ENCODE measurements at regions of chr11 and their contacts with region 1.

Region 1: DNA sequence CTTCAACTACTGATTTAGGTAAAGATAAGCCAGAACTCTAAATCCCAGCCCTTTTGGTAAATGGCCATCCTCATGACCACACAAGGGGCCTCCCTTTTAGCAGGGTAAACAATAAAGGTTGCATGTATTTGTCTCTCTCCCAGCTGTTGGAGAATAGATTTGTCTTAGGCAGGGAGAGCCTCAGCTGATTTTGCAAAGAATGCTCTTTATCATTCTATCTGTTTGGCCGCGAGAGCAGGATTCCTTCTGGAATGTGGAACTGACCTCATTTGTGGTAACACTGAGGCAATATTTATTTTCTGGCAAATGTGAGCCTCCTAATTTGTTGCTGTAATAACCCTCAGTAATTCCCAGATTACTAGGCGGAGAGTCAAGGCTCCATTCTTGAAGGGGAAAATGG is 15.3 kb downstream of the PTS start:
- DNase-seq: peak; percentile 66 to 80
- H3K4me3 ChIP-seq: no peak overlapping the region
- H3K4me3 Mint-ChIP-seq: no peak overlapping the region
- H3K27ac Mint-ChIP-seq: no peak overlapping the region
- H3K4me1 ChIP-seq: peaks cover 12% of the 10 kb centered on the region
- H3K4me1 Mint-ChIP-seq: peaks cover 29% of the 10 kb centered on the region
- H3K27me3 ChIP-seq: no peaks in the 10 kb centered on the region
- H3K27me3 Mint-ChIP-seq: no peaks in the 10 kb centered on the region
- CTCF ChIP-seq: no peak

Region 2: DNA sequence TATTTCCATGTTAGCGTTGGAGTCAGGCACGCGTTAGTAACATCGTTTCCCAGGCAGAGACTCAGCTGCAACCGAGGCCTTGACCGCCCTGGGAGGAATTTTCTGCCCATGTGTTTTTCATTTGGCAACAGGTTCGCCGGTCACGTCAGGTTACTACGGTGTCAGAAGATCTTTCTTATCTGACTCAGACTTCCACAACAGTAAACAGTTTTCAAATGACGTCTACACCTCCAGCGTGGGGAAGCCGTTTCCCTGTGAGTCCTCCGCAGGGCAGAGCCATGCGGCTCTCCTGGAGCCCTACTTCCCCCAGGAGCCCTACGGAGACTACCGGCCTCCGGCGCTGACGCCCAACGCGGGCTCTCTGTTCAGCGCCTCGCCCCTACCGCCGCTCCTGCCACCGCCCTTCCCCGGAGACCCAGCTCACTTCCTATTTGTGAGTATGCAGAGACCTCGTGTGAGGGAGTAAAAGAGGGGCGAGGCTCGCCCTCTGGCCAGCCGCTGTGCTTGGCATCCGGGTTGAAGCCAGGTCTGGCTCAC is 957.5 kb before region 1 on chr11:
- CTCF ChIA-PET with region 1: no interaction called
- POLR2A ChIA-PET with region 1: no interaction called
- intact Hi-C with region 1: no loop called
- DNase-seq: no peak
- H3K4me3 ChIP-seq: no peak overlapping the region
- H3K4me3 Mint-ChIP-seq: no peak overlapping the region
- H3K27ac Mint-ChIP-seq: peak overlapping the region; percentile 14
- H3K4me1 ChIP-seq: peaks cover 44% of the 10 kb centered on the region
- H3K4me1 Mint-ChIP-seq: peaks cover 29% of the 10 kb centered on the region
- H3K27me3 ChIP-seq: no peaks in the 10 kb centered on the region
- H3K27me3 Mint-ChIP-seq: no peaks in the 10 kb centered on the region
- CTCF ChIP-seq: no peak

Region 3: GRCh38 chr11:112050721-112051120 is 190.8 kb before region 1 on chr11:
- CTCF ChIA-PET with region 1: no interaction called
- POLR2A ChIA-PET with region 1: no interaction called
- intact Hi-C with region 1: no loop called
- DNase-seq: no peak
- H3K4me3 ChIP-seq: no peak overlapping the region
- H3K4me3 Mint-ChIP-seq: no peak overlapping the region
- H3K27ac Mint-ChIP-seq: no peak overlapping the region
- H3K4me1 ChIP-seq: no peaks in the 10 kb centered on the region
- H3K4me1 Mint-ChIP-seq: no peaks in the 10 kb centered on the region
- H3K27me3 ChIP-seq: no peaks in the 10 kb centered on the region
- H3K27me3 Mint-ChIP-seq: no peaks in the 10 kb centered on the region
- CTCF ChIP-seq: no peak

Region 4: DNA sequence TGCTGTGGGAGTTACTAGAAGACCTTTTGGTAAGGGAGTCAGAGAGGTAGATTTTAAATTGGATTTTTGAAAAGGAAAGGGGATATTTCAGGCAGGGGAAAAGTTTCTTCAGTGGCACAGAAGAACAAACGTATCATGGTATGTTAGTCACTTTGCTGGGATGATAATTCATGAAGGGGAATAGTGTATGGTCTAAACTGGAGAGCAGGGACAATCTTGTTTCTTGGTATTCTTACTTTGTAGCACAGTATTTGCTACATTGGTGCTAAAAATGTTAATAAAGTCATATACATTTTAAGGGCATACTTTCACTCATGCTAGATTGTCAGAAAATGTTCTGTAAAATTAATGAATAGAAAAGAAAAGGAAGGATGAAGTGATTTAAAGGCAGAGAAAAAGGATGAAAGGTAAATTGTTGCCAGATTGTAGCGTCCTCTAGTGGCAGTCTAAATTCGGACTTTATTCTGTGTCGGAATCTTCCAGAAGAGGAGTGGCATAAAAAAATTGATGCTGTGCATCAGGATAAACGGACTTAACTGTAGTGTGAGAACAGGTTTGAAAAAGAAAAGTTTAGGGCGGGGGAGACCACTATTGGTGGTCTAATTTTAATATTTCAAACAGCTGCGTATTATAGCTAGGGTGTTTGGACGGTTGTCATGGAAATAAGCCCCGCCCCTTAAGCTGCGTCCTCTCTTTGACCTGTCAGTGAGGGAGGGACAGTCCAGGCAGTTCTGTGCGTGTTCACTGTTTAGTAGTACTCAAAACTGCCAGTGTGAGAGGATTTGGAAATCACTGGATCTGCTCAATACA is 66.5 kb before region 1 on chr11 and contains the start of gene BCO2:
- CTCF ChIA-PET with region 1: no interaction called
- POLR2A ChIA-PET with region 1: no interaction called
- intact Hi-C with region 1: no loop called
- DNase-seq: peak; percentile 88 to 89
- H3K4me3 ChIP-seq: no peak within 1 kb of the TSS
- H3K4me3 Mint-ChIP-seq: peak within 1 kb of the TSS; percentile 60
- H3K27ac Mint-ChIP-seq: peak within 1 kb of the TSS; percentile 65
- H3K4me1 ChIP-seq: peaks cover 14% of the 10 kb centered on the region
- H3K4me1 Mint-ChIP-seq: peaks cover 21% of the 10 kb centered on the region
- H3K27me3 ChIP-seq: no peaks in the 10 kb centered on the region
- H3K27me3 Mint-ChIP-seq: peaks cover 12% of the 10 kb centered on the region
- CTCF ChIP-seq: peak; percentile 84 to 96
- total RNA-seq, gene BCO2: 1.3 and 2.2 TPM in 2 replicates

Region 5: GRCh38 chr11:112195906-112196305 is 45.6 kb before region 1 on chr11:
- CTCF ChIA-PET with region 1: no interaction called
- POLR2A ChIA-PET with region 1: no interaction called
- intact Hi-C with region 1: no loop called
- DNase-seq: peak in 1 of 2 experiments; percentile 46
- H3K4me3 ChIP-seq: no peak overlapping the region
- H3K4me3 Mint-ChIP-seq: no peak overlapping the region
- H3K27ac Mint-ChIP-seq: no peak overlapping the region
- H3K4me1 ChIP-seq: peaks cover 9% of the 10 kb centered on the region; the same call in 1 of the 2 replicates
- H3K4me1 Mint-ChIP-seq: no peaks in the 10 kb centered on the region
- H3K27me3 ChIP-seq: no peaks in the 10 kb centered on the region
- H3K27me3 Mint-ChIP-seq: no peaks in the 10 kb centered on the region
- CTCF ChIP-seq: no peak

Region 6: GRCh38 chr11:112226062-112226830 is 15.2 kb before region 1 on chr11 and contains the start of gene PTS:
- CTCF ChIA-PET with region 1: interaction called, 3 read pairs
- POLR2A ChIA-PET with region 1: no interaction called
- intact Hi-C with region 1: loop called (anchors 1 kb)
- DNase-seq: peak; percentile 91 to 94
- H3K4me3 ChIP-seq: peak within 1 kb of the TSS; percentile 63
- H3K4me3 Mint-ChIP-seq: peak within 1 kb of the TSS; percentile 98
- H3K27ac Mint-ChIP-seq: peak within 1 kb of the TSS; percentile 98
- H3K4me1 ChIP-seq: peaks cover 28% of the 10 kb centered on the region
- H3K4me1 Mint-ChIP-seq: peaks cover 21% of the 10 kb centered on the region
- H3K27me3 ChIP-seq: no peaks in the 10 kb centered on the region
- H3K27me3 Mint-ChIP-seq: no peaks in the 10 kb centered on the region
- CTCF ChIP-seq: no peak
- total RNA-seq, gene PTS: 78.0 and 79.5 TPM in 2 replicates